Natural killer cell (primary cell): ENCODE measurements at regions of chr1 and their contacts with region 1.

Region 1: DNA sequence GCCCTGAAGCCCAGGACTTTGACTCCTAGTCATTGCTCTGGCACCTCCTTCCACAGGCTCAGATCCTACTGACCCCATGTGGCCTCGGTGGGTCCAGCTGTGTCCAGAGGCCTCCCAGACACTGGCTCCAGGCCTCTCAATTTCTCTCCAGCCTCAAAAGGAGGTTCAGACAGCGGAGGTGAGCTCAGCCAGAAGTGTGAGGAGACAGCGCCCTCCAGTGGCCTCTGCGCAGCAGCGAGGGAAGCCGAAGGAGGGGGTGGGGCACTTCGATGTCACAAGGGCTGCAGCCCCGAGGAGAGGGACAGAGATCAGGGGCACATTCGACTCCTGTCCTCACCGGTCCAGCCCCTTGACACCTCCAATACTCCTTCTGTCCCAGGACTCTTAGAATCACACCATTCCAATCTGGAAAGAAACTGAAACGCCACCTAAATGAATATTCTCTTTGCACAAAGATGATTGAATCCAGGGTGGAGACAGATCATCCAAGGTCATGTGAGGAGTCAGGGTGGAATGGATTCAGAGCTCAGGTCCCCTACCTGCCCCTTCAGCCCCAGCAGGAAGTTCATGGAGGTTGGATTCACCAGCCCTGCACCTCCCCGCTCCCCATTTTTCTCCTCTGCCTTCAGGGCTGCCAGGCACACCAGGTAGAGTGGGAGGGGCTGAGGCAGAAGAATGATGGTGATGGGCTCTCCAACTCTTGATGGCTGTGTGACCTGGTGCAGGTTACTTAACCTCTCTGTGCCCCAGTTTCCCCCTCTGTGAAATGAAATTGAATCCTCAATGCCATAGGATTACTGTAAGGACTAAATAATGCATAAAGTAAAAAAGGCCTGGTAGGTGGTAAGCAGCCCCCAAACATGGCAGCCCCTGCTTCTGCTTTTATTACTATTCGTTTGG is 34.8 kb upstream of the ZBTB40 start:
- DNase-seq: peak; percentile 53 to 85
- ATAC-seq: peak; percentile 74 to 86 (median 85)
- H3K4me3 ChIP-seq: no peak overlapping the region
- H3K4me3 Mint-ChIP-seq: no peak overlapping the region
- H3K27ac ChIP-seq: no peak overlapping the region
- H3K27ac Mint-ChIP-seq: no peak overlapping the region
- H3K4me1 ChIP-seq: no peaks in the 10 kb centered on the region
- H3K4me1 Mint-ChIP-seq: no peaks in the 10 kb centered on the region
- H3K27me3 ChIP-seq: peaks cover 2% of the 10 kb centered on the region
- H3K27me3 Mint-ChIP-seq: peaks cover 28 to 33% of the 10 kb centered on the region in 2 donors
- CTCF ChIP-seq: peak; percentile 72

Region 2: DNA sequence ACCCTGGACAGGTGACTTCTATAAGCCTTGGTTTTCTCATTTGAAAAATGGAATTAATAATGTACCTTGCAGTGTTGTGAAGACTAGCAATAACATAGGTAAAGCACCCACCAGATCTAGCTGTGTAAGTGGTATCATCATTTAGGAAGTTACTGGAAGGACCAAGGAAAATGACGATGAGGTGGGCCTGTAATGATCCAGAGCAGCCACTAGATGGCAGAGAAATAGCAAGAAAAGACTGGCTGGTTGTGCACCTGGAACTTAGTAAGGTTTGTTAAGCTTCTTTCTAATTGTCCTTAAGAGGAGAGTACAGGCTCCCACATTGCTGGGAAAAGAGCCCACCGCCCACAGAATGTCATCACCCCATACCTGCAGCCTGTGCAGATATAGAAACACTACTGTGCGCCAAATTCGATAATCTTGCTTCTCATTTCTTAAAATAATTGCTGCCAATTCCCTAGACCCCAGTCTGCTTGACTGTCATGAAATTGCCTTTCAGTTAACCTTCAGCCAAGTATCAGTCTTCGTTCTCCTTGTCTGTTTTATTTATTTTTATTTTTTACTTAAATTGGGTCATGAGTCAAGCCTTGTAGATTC is 311.1 kb before region 1 on chr1:
- intact Hi-C with region 1: loop called (anchors 10 kb)
- DNase-seq: peak in 1 of 2 donors; percentile 72
- ATAC-seq: peak; percentile 61 to 69 (median 65)
- H3K4me3 ChIP-seq: no peak overlapping the region
- H3K4me3 Mint-ChIP-seq: peak overlapping the region; percentile 51
- H3K27ac ChIP-seq: peak overlapping the region; percentile 68
- H3K27ac Mint-ChIP-seq: peak overlapping the region; percentile 90
- H3K4me1 ChIP-seq: peaks cover 23% of the 10 kb centered on the region
- H3K4me1 Mint-ChIP-seq: peaks cover 77 to 79% of the 10 kb centered on the region in 2 donors
- H3K27me3 ChIP-seq: no peaks in the 10 kb centered on the region
- H3K27me3 Mint-ChIP-seq: no peaks in the 10 kb centered on the region
- CTCF ChIP-seq: peak; percentile 86

Region 3: GRCh38 chr1:22641906-22642636 is 225.3 kb after region 1 on chr1:
- intact Hi-C with region 1: loop called (anchors 1 kb)
- DNase-seq: peak; percentile 59 to 75
- ATAC-seq: peak; percentile 54 to 93 (median 90)
- H3K4me3 ChIP-seq: no peak overlapping the region
- H3K4me3 Mint-ChIP-seq: no peak overlapping the region
- H3K27ac ChIP-seq: no peak overlapping the region
- H3K27ac Mint-ChIP-seq: no peak overlapping the region
- H3K4me1 ChIP-seq: peaks cover 4% of the 10 kb centered on the region
- H3K4me1 Mint-ChIP-seq: peaks cover 0 to 2% of the 10 kb centered on the region in 2 donors
- H3K27me3 ChIP-seq: no peaks in the 10 kb centered on the region
- H3K27me3 Mint-ChIP-seq: peaks cover 0 to 6% of the 10 kb centered on the region in 2 donors
- CTCF ChIP-seq: peak; percentile 76